A673 (cell line): ENCODE measurements at regions of chr11 and their contacts with region 1.

Region 1: DNA sequence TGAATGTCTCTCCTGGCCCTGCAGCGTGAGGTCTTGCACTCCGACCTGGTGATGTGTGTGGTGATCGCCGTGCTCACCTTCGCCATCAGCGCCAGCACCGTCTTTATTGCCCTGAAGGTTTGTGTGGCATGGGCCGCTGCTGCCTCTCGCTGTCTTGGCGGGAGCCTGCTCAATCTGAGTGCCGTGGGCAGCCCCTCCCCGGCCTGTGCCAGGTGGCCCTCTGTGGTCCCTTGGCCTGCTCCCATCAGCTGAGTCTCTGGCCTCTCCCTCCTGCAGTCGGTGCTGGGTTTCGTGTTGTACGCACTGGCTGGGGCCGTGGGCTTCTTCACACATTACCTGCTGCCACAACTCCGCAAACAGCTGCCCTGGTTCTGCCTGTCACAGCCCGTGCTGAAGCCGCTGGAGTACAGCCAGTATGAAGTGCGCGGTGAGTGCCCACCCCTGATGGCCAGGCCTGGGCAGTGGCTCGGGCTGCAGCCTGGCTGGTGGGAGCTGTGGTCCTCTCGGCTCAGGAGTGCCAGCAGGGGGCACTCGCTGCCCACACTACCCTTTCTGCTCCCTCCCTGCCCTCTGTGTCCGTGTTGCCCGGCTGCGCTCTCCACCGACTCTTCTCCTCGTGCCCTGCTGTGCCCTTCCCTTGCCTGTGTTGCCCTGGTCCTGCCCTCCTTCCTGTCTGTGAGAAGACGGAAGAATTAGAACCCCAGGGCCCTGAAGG is 10.2 kb downstream of the PCNX3 start:
- DNase-seq: no peak
- H3K4me3 ChIP-seq: no peak overlapping the region
- H3K27ac ChIP-seq: no peak overlapping the region
- H3K4me1 ChIP-seq: no peaks in the 10 kb centered on the region
- H3K27me3 ChIP-seq: no peaks in the 10 kb centered on the region
- CTCF ChIP-seq: peak; percentile 70

Region 2: DNA sequence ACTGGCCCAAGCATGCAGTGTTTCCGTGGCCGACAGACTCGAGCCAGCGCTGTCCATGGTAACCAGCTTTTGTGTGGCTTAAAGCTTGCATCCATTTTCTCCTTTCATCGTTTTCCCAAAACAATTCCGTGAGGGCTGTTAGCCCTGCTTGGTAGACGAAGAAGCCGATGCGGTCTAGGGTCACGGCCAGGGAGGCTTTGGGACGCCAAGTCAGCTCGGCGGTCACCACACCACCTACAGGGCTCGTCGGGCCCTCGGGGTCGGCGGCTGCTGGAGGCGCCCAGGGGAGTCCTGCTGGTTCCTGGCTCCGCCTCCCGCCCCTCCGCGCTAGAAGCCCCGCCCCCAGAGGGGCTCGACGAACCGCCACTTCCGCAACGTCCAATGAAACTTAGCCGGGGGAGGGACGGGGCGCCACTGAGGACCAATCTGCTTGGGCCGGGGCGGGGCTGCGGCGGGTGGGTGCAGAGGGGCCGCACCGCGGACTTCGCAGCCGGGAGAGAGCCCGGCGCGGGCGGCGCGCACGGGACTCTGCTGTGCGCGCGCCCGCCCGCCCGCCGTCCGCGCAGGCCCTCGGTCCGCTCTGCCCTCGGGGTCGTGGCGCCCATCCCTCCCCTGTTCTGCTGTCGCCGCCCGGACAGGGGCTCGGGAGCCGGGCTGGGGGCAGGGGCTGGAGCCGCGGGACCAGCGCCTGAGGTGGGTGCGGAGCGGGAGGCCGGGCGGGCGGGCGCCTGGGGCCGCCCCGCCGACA is 271.3 kb before region 1 on chr11 and contains the start of gene TIGD3:
- CTCF ChIA-PET with region 1: no interaction called
- POLR2A ChIA-PET with region 1: no interaction called
- intact Hi-C with region 1: no loop called
- DNase-seq: peak; percentile 99
- H3K4me3 ChIP-seq: peak within 1 kb of the TSS; percentile 71
- H3K27ac ChIP-seq: peak within 1 kb of the TSS; percentile 55
- H3K4me1 ChIP-seq: no peaks in the 10 kb centered on the region
- H3K27me3 ChIP-seq: no peaks in the 10 kb centered on the region
- CTCF ChIP-seq: no peak
- total RNA-seq, gene TIGD3: 2.3 and 3.5 TPM in 2 replicates

Region 3: GRCh38 chr11:65560555-65561418 is 65.0 kb before region 1 on chr11:
- CTCF ChIA-PET with region 1: interaction called, 12 read pairs
- POLR2A ChIA-PET with region 1: no interaction called
- intact Hi-C with region 1: no loop called
- DNase-seq: peak; percentile 77
- H3K4me3 ChIP-seq: no peak overlapping the region
- H3K27ac ChIP-seq: peak overlapping the region; percentile 49
- H3K4me1 ChIP-seq: peaks cover 41% of the 10 kb centered on the region
- H3K27me3 ChIP-seq: no peaks in the 10 kb centered on the region
- CTCF ChIP-seq: no peak

Region 4: GRCh38 chr11:65700391-65700790 is 74.6 kb after region 1 on chr11:
- CTCF ChIA-PET with region 1: no interaction called
- POLR2A ChIA-PET with region 1: no interaction called
- intact Hi-C with region 1: loop called (anchors 10 kb)
- DNase-seq: peak; percentile 32
- H3K4me3 ChIP-seq: no peak overlapping the region
- H3K27ac ChIP-seq: no peak overlapping the region
- H3K4me1 ChIP-seq: no peaks in the 10 kb centered on the region
- H3K27me3 ChIP-seq: no peaks in the 10 kb centered on the region
- CTCF ChIP-seq: no peak